ENCODE measurements at regions of chr19 and their contacts with region 1.

Region 1: GRCh38 chr19:12881172-12881808 is at the start of gene DNASE2:
- DNase-seq: peak; percentile 97 to 99 (median 97)
- ATAC-seq: peak; percentile 96
- H3K4me3 ChIP-seq: peak within 1 kb of the TSS; percentile 43
- H3K27ac ChIP-seq: peak within 1 kb of the TSS; percentile 26
- H3K4me1 ChIP-seq: no peaks in the 10 kb centered on the region
- H3K27me3 ChIP-seq: no peaks in the 10 kb centered on the region
- total RNA-seq, gene DNASE2: 22.2 to 30.6 (median 24.5) TPM

Region 2: GRCh38 chr19:12965017-12965811 is 83.9 kb after region 1 on chr19:
- intact Hi-C with region 1: loop called in 1 of 4 experiments (anchors 10 kb)
- DNase-seq: peak; percentile 82 to 93 (median 93)
- ATAC-seq: peak; percentile 92 to 94
- H3K4me3 ChIP-seq: peak overlapping the region; percentile 63
- H3K27ac ChIP-seq: peak overlapping the region; percentile 13
- H3K4me1 ChIP-seq: no peaks in the 10 kb centered on the region
- H3K27me3 ChIP-seq: no peaks in the 10 kb centered on the region

Measured in right cardiac atrium (tissue), 5 donors.